ENCODE measurements at regions of chr5 and their contacts with region 1.

Region 1: DNA sequence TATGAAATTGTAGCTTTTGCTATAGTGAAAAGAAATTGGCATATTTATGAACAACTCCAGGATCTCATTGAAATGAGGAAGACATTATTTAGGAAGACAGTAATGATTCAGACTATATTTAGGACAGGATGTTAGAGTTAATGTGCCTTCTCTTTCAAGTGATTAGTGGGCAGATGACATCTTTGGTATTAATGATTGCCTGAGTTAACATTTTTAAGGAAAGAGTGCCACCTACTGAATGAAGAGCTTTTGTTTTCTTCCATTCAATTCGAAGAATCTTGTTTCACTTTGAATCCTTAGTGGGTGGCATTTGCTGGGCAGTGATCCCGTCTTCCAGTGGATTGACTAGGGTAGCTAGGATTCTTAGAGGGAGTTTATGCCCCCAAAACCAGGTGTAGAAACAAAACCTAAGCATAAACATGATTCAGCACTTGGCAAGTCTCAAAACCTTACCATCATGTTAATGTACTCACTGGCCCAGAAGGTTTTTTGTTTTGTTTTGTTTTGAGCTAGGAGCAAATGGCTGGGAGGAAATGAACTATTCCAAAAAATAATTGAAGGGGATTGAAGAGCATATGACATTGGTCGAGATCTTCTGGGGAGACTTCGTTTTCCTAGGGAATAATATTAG is 23.2 kb downstream of the MAP3K1 start:
- DNase-seq: no peak
- H3K4me3 Mint-ChIP-seq: peak overlapping the region; percentile 53
- H3K27ac Mint-ChIP-seq: peak overlapping the region; percentile 57
- H3K4me1 Mint-ChIP-seq: peaks cover 71% of the 10 kb centered on the region
- H3K27me3 Mint-ChIP-seq: no peaks in the 10 kb centered on the region
- CTCF ChIP-seq: peak; percentile 43

Region 2: DNA sequence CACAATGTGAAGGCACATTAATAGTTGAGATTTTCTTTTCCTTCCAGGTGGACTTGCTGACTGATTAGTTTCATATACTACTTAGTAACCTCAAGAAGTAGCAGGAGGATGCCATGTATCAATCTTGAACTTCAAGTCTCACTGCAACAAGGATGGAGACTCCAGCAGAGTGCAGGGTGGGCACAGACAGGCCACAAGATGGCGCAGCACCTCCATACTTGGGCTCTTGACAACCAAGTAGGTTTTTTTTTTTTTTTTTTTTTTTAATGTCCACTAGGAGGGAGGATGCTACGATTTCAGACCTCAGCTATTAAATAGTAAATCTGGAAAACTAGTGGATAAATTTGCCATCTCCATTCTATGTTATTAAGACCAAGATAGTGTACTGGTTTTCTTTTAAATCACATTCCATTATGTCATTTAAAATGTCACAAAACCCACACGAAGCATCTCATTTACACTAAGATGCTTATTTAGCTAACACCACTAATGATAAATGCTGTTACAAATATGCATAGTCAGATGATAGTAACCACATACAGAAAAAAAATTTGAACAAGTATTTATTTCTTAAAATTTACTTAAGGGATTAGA is 902.3 kb before region 1 on chr5:
- CTCF ChIA-PET with region 1: no interaction called
- intact Hi-C with region 1: loop called (anchors 10 kb)
- DNase-seq: peak; percentile 80
- H3K4me3 Mint-ChIP-seq: no peak overlapping the region
- H3K27ac Mint-ChIP-seq: no peak overlapping the region
- H3K4me1 Mint-ChIP-seq: peaks cover 35% of the 10 kb centered on the region
- H3K27me3 Mint-ChIP-seq: no peaks in the 10 kb centered on the region
- CTCF ChIP-seq: peak; percentile 79

Region 3: GRCh38 chr5:56429082-56429891 is 409.2 kb before region 1 on chr5:
- CTCF ChIA-PET with region 1: no interaction called
- intact Hi-C with region 1: loop called (anchors 10 kb)
- DNase-seq: peak; percentile 51
- H3K4me3 Mint-ChIP-seq: peak overlapping the region; percentile 31
- H3K27ac Mint-ChIP-seq: peak overlapping the region; percentile 57
- H3K4me1 Mint-ChIP-seq: peaks cover 10% of the 10 kb centered on the region
- H3K27me3 Mint-ChIP-seq: no peaks in the 10 kb centered on the region
- CTCF ChIP-seq: no peak

Region 4: DNA sequence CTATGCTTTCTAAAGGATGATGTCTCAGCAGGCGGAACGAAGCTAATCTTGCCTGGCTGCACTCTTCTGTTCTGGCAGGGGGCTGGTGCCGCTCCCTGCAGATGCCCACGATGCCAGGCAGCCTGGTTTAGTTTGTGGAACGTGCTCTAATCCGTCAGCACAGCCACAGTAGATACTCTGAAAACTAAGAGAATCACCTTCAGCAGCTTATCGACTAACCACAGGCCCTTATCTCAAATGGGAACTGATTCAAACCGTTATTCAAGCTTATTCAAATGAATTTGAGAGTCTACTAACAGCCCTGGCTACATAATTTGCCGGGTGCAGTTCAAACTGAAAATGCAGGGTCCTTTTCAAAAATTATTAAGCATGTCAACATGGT is 358.8 kb before region 1 on chr5:
- CTCF ChIA-PET with region 1: interaction called, 3 read pairs
- intact Hi-C with region 1: loop called (anchors 10 kb)
- DNase-seq: no peak
- H3K4me3 Mint-ChIP-seq: peak overlapping the region; percentile 68
- H3K27ac Mint-ChIP-seq: peak overlapping the region; percentile 73
- H3K4me1 Mint-ChIP-seq: peaks cover 31% of the 10 kb centered on the region
- H3K27me3 Mint-ChIP-seq: no peaks in the 10 kb centered on the region
- CTCF ChIP-seq: no peak

Region 5: DNA sequence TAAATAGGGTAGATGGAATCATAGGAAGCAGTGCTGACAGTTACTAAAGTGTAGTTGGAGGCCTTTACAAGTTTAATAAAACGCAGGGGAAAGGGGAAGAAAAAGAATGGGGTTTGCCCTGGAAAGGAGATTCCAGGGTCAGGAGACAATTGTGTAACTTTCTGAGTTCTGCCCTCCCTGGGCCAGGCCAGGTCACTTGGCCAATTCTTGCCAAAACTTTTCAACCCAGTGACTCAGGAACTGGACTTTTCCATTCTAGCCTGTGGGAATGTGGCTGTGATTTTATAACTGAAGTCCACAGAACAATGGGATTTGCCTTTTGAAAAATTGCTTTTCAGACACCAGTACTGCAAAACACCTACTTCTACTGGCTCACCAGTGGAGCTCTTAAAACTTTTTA is 315.6 kb before region 1 on chr5:
- CTCF ChIA-PET with region 1: no interaction called
- intact Hi-C with region 1: loop called (anchors 10 kb)
- DNase-seq: no peak
- H3K4me3 Mint-ChIP-seq: no peak overlapping the region
- H3K27ac Mint-ChIP-seq: no peak overlapping the region
- H3K4me1 Mint-ChIP-seq: peaks cover 60% of the 10 kb centered on the region
- H3K27me3 Mint-ChIP-seq: no peaks in the 10 kb centered on the region
- CTCF ChIP-seq: no peak

Region 6: GRCh38 chr5:56575821-56576220 is 262.7 kb before region 1 on chr5:
- CTCF ChIA-PET with region 1: no interaction called
- intact Hi-C with region 1: no loop called
- DNase-seq: no peak
- H3K4me3 Mint-ChIP-seq: no peak overlapping the region
- H3K27ac Mint-ChIP-seq: no peak overlapping the region
- H3K4me1 Mint-ChIP-seq: no peaks in the 10 kb centered on the region
- H3K27me3 Mint-ChIP-seq: no peaks in the 10 kb centered on the region
- CTCF ChIP-seq: no peak

Region 7: GRCh38 chr5:56827049-56827448 is 11.5 kb before region 1 on chr5:
- CTCF ChIA-PET with region 1: interaction called, 17 read pairs
- intact Hi-C with region 1: no loop called
- DNase-seq: peak; percentile 69
- H3K4me3 Mint-ChIP-seq: peak overlapping the region; percentile 42
- H3K27ac Mint-ChIP-seq: peak overlapping the region; percentile 41
- H3K4me1 Mint-ChIP-seq: peaks cover 92% of the 10 kb centered on the region
- H3K27me3 Mint-ChIP-seq: no peaks in the 10 kb centered on the region
- CTCF ChIP-seq: peak; percentile 49

Region 8: GRCh38 chr5:56951946-56952691 is 113.6 kb after region 1 on chr5 and contains the start of gene MIER3:
- CTCF ChIA-PET with region 1: no interaction called
- intact Hi-C with region 1: no loop called
- DNase-seq: peak; percentile 83
- H3K4me3 Mint-ChIP-seq: peak within 1 kb of the TSS; percentile 82
- H3K27ac Mint-ChIP-seq: peak within 1 kb of the TSS; percentile 28
- H3K4me1 Mint-ChIP-seq: peaks cover 22% of the 10 kb centered on the region
- H3K27me3 Mint-ChIP-seq: no peaks in the 10 kb centered on the region
- CTCF ChIP-seq: no peak
- total RNA-seq, gene MIER3: 24.1 and 26.3 TPM in 2 replicates